ENCODE measurements at regions of chr5 and their contacts with region 1.

Region 1: DNA sequence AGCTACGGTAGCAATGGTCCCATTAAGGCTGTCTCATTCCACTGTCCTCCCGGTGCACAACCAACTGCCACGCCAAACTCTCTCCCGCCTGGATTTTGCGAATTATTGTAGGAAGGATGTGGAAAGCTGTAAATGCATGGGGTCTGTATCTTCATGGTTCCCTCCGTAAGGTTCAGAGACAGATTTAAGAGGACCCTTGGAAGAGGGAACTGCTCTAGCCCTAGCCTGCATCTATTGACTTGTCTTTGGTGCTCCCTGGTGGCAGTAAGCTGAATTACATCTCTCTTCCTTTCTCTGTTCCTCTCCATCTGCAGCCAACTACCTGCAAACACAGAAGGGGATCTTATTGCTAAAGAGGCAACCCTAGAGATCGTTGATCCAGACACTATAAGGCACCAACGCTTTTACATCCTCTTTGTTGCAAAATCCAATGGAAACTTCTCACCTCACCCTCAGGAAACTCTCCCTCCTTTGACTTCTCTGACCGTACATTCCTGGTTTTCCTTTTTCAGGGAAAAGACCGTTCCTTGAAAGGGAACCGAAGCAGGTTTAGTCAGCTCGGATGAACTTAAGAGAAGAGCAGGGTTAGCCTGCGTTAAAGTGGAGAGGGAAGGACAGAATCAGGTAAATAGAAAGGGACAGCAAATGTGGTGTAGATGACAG is 11.9 kb downstream of the CAPSL start:
- DNase-seq: peak; percentile 29 to 80 (median 73)
- ATAC-seq: peak; percentile 70
- H3K4me3 ChIP-seq: no peak overlapping the region
- H3K4me3 Mint-ChIP-seq: peak overlapping the region; percentile 35 to 87 (median 58)
- H3K27ac ChIP-seq: no peak overlapping the region
- H3K27ac Mint-ChIP-seq: peak overlapping the region in 3 of 9 donors; percentile 1 to 60 (median 7)
- H3K4me1 ChIP-seq: peaks cover 10 to 14% of the 10 kb centered on the region in 2 donors
- H3K4me1 Mint-ChIP-seq: peaks cover 18 to 49% (median 35%) of the 10 kb centered on the region in 7 donors
- H3K27me3 ChIP-seq: no peaks in the 10 kb centered on the region
- H3K27me3 Mint-ChIP-seq: peaks cover 0 to 13% (median 5%) of the 10 kb centered on the region in 5 donors

Region 2: GRCh38 chr5:35202319-35203111 is 724.0 kb before region 1 on chr5:
- CTCF ChIA-PET with region 1: interaction called, 3 read pairs
- POLR2A ChIA-PET with region 1: no interaction called
- intact Hi-C with region 1: loop called in 1 of 2 experiments (anchors 1 kb)
- DNase-seq: peak in 4 of 9 donors; percentile 2 to 4 (median 2)
- ATAC-seq: peak; percentile 40
- H3K4me3 ChIP-seq: no peak overlapping the region
- H3K4me3 Mint-ChIP-seq: no peak overlapping the region
- H3K27ac ChIP-seq: no peak overlapping the region
- H3K27ac Mint-ChIP-seq: no peak overlapping the region
- H3K4me1 ChIP-seq: no peaks in the 10 kb centered on the region
- H3K4me1 Mint-ChIP-seq: peaks cover 0 to 1% (median 0%) of the 10 kb centered on the region in 7 donors
- H3K27me3 ChIP-seq: no peaks in the 10 kb centered on the region
- H3K27me3 Mint-ChIP-seq: peaks cover 20 to 43% (median 30%) of the 10 kb centered on the region in 5 donors

Region 3: GRCh38 chr5:35478856-35479682 is 447.5 kb before region 1 on chr5:
- CTCF ChIA-PET with region 1: interaction called, 6 read pairs
- POLR2A ChIA-PET with region 1: no interaction called
- intact Hi-C with region 1: loop called in 1 of 2 experiments (anchors 2 kb)
- DNase-seq: peak in 6 of 9 donors; percentile 20 to 45 (median 32)
- ATAC-seq: peak; percentile 63
- H3K4me3 ChIP-seq: peak overlapping the region; percentile 23
- H3K4me3 Mint-ChIP-seq: peak overlapping the region; percentile 67 to 92 (median 78)
- H3K27ac ChIP-seq: peak overlapping the region; percentile 43
- H3K27ac Mint-ChIP-seq: peak overlapping the region; percentile 75 to 98 (median 89)
- H3K4me1 ChIP-seq: no peaks in the 10 kb centered on the region
- H3K4me1 Mint-ChIP-seq: peaks cover 8 to 23% (median 15%) of the 10 kb centered on the region in 7 donors
- H3K27me3 ChIP-seq: no peaks in the 10 kb centered on the region
- H3K27me3 Mint-ChIP-seq: peaks cover 0 to 9% (median 0%) of the 10 kb centered on the region in 5 donors

Region 4: GRCh38 chr5:35656721-35657120 is 269.8 kb before region 1 on chr5:
- CTCF ChIA-PET with region 1: interaction called, 137 read pairs
- POLR2A ChIA-PET with region 1: interaction called, 9 read pairs
- intact Hi-C with region 1: loop called (anchors 1 kb)
- DNase-seq: no peak
- ATAC-seq: no peak
- H3K4me3 ChIP-seq: no peak overlapping the region
- H3K4me3 Mint-ChIP-seq: no peak overlapping the region
- H3K27ac ChIP-seq: no peak overlapping the region
- H3K27ac Mint-ChIP-seq: peak overlapping the region in 2 of 9 donors; percentile 16 to 45
- H3K4me1 ChIP-seq: peaks cover 0 to 5% of the 10 kb centered on the region in 2 donors
- H3K4me1 Mint-ChIP-seq: peaks cover 7 to 34% (median 19%) of the 10 kb centered on the region in 7 donors
- H3K27me3 ChIP-seq: no peaks in the 10 kb centered on the region
- H3K27me3 Mint-ChIP-seq: no peaks in the 10 kb centered on the region

Region 5: GRCh38 chr5:35815089-35815936 is 111.2 kb before region 1 on chr5:
- CTCF ChIA-PET with region 1: interaction called, 3 read pairs
- POLR2A ChIA-PET with region 1: interaction called, 3 read pairs
- intact Hi-C with region 1: loop called (anchors 1 kb)
- DNase-seq: peak in 2 of 9 donors; percentile 41 to 45
- ATAC-seq: no peak
- H3K4me3 ChIP-seq: peak overlapping the region; percentile 25
- H3K4me3 Mint-ChIP-seq: no peak overlapping the region
- H3K27ac ChIP-seq: peak overlapping the region; percentile 23
- H3K27ac Mint-ChIP-seq: no peak overlapping the region
- H3K4me1 ChIP-seq: peaks cover 67 to 88% of the 10 kb centered on the region in 2 donors
- H3K4me1 Mint-ChIP-seq: peaks cover 25 to 56% (median 43%) of the 10 kb centered on the region in 7 donors
- H3K27me3 ChIP-seq: no peaks in the 10 kb centered on the region
- H3K27me3 Mint-ChIP-seq: no peaks in the 10 kb centered on the region

Region 6: DNA sequence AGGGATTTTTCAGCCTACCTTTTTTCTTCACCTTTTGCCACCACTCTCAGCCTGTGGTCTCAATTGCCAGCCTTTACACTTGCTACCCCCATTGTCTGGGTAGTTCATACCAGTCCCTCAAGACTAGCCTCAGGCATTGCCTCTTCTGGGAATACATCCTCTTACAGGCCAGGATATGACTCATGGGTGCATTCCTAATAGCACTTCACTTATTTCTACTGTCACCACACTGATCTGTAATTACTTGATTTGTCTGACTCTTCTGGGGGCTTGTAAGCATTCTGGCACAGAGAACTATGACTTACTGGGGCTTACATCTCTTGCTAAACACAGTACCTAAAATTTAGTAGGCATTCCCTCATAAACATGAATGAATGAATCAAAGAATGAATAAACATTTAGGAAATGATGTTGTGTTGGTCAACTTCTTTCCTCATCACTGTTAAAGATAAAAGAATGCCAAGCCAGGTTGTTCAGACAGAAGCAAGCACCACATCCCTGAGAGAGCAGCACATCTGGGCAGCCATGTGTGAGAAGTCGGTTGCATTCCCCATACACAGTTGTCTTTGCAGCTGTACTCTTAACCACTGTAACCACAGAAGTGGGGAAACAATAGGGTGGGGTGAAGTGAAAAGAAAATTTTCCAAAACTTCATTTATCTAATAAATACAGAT is 42.3 kb before region 1 on chr5:
- CTCF ChIA-PET with region 1: interaction called, 6 read pairs
- POLR2A ChIA-PET with region 1: interaction called, 4 read pairs
- intact Hi-C with region 1: loop called (anchors 2 kb)
- DNase-seq: no peak
- ATAC-seq: peak; percentile 57
- H3K4me3 ChIP-seq: no peak overlapping the region
- H3K4me3 Mint-ChIP-seq: peak overlapping the region in 8 of 10 donors; percentile 2 to 62 (median 18)
- H3K27ac ChIP-seq: no peak overlapping the region
- H3K27ac Mint-ChIP-seq: peak overlapping the region in 8 of 9 donors; percentile 5 to 90 (median 68)
- H3K4me1 ChIP-seq: peaks cover 10 to 25% of the 10 kb centered on the region in 2 donors
- H3K4me1 Mint-ChIP-seq: peaks cover 37 to 56% (median 51%) of the 10 kb centered on the region in 7 donors
- H3K27me3 ChIP-seq: no peaks in the 10 kb centered on the region
- H3K27me3 Mint-ChIP-seq: no peaks in the 10 kb centered on the region